Lower leg skin (tissue), 4 donors: ENCODE measurements at regions of chr19 and their contacts with region 1.

Region 1: DNA sequence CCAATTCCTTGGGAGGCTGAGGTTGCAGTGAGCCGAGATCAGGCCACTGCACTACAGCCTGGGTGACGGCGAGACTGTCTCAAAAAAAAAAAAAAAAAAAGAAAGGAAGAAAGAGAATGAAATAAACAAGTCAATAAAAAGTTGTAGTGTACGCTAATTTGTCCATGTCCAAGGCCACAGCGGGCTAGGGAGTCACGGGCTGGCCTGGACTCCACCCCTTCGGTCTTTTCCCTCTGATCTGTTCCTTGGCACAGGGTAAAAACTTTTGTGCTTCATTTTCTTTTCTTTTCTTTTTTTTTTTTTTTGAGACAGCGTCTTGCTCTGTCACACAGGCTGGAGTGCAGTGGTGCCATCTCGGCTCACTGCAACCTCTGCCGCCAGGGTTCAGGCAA is 19.4 kb upstream of the MKNK2 start:
- DNase-seq: no peak
- H3K4me3 ChIP-seq: no peak overlapping the region
- CTCF ChIP-seq: no peak
- POLR2A ChIP-seq: no peak

Region 2: DNA sequence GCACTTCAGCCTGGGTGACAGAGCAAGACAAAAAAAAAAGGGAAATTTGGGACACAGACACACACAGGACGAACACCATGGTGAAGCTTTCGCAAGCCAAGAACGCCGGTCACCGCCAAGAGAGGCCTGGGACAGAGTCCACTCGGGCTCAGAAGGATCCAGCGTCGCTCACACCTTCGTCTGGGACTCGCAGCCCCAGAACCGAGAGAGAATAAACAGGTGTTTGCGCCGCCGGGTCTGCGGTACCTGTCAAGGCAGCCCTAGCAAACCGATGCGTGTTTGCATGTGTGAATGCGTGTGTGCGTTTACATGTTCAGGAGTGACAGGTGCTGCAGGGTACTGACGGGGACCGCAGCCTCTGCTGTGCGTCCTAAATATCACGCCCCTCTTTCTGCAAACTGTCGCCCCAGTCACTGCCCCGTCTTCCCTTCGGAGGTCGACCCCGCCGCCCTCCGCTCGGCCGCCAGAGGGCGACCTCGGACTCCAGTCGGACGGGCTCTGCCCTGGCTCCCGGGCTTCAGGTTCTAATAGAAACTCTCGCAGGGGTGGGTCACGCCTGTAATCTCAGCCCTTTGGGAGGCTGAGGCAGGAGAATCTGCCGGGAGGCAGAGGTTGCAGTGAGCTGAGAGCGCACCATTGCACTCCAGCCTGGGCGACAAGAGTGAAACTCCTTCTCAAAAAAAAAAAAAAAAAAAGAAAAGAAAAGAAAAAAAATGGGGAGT is 141.2 kb before region 1 on chr19:
- intact Hi-C with region 1: loop called (anchors 5 kb)
- DNase-seq: peak; percentile 60 to 94
- H3K4me3 ChIP-seq: no peak overlapping the region
- CTCF ChIP-seq: peak in 1 of 3 donors; percentile 67
- POLR2A ChIP-seq: no peak

Region 3: DNA sequence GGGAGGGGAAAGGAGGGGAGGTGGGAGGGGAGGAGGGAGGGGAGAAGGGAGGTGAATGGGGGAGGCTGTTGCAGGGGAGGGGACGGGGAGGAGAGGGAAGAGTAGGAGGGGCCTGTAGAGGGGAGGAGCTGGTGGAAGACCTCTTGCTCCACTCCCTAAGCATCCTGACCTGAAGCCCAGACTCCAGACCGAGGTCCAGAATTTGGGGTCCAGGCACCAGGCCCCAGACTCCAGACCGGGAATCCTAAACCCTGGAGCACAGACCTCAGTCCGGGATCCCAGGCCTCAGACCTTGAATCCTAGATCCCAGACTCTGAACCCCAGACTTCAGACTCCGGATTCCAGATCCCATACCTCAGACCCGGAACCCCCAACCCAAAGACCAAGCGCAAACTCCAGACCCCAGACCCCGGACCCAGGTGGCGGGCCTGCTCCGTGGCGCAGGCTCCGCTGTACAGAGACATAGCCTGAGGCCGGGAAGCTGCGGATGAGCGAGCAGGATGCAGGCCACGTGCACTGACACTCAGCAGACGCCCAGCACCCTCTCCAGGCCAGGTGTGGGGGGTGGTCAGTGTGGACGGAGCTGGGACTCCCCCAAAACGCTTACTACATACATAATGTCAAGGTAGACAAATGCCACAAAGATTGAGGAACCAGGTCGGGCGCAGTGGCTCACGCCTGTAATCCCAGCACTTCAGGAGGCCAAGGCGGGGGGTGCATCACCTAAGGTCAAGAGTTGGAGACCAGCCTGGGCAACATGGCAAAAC is 54.2 kb before region 1 on chr19:
- intact Hi-C with region 1: loop called (anchors 5 kb)
- DNase-seq: peak; percentile 85 to 93
- H3K4me3 ChIP-seq: no peak overlapping the region
- CTCF ChIP-seq: no peak
- POLR2A ChIP-seq: no peak